ENCODE measurements at regions of chr6 and their contacts with region 1.

Region 1: DNA sequence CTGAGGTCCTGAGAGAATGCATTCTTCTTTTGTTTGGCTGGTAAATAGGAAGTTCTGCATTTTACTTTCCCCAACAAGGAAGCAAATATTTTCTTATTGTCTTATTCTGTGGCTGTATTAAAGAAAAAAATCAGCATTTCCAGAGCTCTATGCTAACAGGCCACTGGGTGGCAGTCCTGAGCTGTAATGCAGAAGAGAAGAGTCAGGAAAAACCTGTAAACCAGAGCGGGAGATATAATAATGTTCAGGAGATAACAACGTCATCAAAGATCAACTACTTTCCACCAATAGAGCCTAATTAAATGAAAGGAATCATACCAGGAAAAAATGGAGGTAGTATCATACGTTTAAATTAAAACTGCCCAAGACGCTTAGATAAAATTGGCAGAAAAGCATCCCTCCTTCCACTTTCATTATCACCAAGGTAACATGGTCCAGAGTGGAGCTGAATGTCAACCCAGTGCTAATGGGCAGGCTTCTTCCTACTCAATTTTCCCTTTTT is 55.6 kb upstream of the CARMIL1 start:
- DNase-seq: peak; percentile 92
- H3K4me3 Mint-ChIP-seq: peak overlapping the region; percentile 1
- H3K27ac Mint-ChIP-seq: no peak overlapping the region
- H3K4me1 Mint-ChIP-seq: peaks cover 29% of the 10 kb centered on the region
- H3K27me3 Mint-ChIP-seq: no peaks in the 10 kb centered on the region
- CTCF ChIP-seq: peak; percentile 99

Region 2: DNA sequence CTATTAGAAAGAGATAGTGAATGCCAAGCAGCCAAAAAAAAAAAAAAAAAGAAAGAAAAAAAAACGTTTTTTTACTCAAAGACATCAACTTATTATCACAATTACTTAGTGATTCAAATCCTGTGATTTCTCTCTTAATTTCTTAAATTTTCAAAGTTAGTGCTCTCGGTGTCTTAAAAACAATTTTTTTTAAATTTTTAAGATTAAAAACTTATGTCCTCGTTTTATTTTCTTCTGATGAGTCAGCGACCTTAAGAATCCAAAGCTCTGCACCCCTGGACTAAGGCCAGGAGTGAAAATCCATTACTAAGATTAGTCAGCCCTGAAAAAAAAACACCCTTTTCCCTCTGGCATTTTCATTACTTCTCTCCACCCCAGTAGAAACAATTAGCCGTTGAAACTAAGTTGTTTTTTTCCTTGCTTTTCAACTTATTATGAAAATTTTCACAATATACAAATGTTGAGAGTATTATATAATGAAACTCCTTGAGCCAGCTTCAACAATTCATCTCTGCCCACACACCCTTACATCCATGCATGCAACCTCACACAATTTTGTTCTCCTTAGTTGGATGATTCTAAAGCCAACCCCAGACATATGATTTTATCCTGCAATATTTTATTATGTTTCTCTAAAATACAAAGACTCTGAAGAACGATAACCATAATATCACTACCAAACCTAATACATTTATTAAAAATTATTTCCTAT is 29.9 kb before region 1 on chr6:
- CTCF ChIA-PET with region 1: interaction called, 25 read pairs
- intact Hi-C with region 1: no loop called
- DNase-seq: peak; percentile 76
- H3K4me3 Mint-ChIP-seq: peak overlapping the region; percentile 27
- H3K27ac Mint-ChIP-seq: peak overlapping the region; percentile 27
- H3K4me1 Mint-ChIP-seq: peaks cover 27% of the 10 kb centered on the region
- H3K27me3 Mint-ChIP-seq: no peaks in the 10 kb centered on the region
- CTCF ChIP-seq: no peak

Region 3: GRCh38 chr6:25490018-25490801 is 266.7 kb after region 1 on chr6:
- CTCF ChIA-PET with region 1: interaction called, 23 read pairs
- intact Hi-C with region 1: loop called (anchors 1 kb)
- DNase-seq: peak; percentile 86
- H3K4me3 Mint-ChIP-seq: no peak overlapping the region
- H3K27ac Mint-ChIP-seq: peak overlapping the region; percentile 2
- H3K4me1 Mint-ChIP-seq: peaks cover 13% of the 10 kb centered on the region
- H3K27me3 Mint-ChIP-seq: no peaks in the 10 kb centered on the region
- CTCF ChIP-seq: peak; percentile 81

Region 4: GRCh38 chr6:25601800-25602673 is 378.5 kb after region 1 on chr6:
- CTCF ChIA-PET with region 1: interaction called, 4 read pairs
- intact Hi-C with region 1: loop called (anchors 1 kb)
- DNase-seq: no peak
- H3K4me3 Mint-ChIP-seq: no peak overlapping the region
- H3K27ac Mint-ChIP-seq: peak overlapping the region; percentile 13
- H3K4me1 Mint-ChIP-seq: peaks cover 17% of the 10 kb centered on the region
- H3K27me3 Mint-ChIP-seq: no peaks in the 10 kb centered on the region
- CTCF ChIP-seq: peak; percentile 47

Region 5: GRCh38 chr6:25889877-25890853 is 666.6 kb after region 1 on chr6:
- CTCF ChIA-PET with region 1: interaction called, 3 read pairs
- intact Hi-C with region 1: loop called (anchors 5 kb)
- DNase-seq: peak; percentile 66
- H3K4me3 Mint-ChIP-seq: no peak overlapping the region
- H3K27ac Mint-ChIP-seq: no peak overlapping the region
- H3K4me1 Mint-ChIP-seq: peaks cover 13% of the 10 kb centered on the region
- H3K27me3 Mint-ChIP-seq: no peaks in the 10 kb centered on the region
- CTCF ChIP-seq: peak; percentile 55

Measured in Calu3 (cell line).